ENCODE measurements at regions of chr17 and their contacts with region 1.

Region 1: DNA sequence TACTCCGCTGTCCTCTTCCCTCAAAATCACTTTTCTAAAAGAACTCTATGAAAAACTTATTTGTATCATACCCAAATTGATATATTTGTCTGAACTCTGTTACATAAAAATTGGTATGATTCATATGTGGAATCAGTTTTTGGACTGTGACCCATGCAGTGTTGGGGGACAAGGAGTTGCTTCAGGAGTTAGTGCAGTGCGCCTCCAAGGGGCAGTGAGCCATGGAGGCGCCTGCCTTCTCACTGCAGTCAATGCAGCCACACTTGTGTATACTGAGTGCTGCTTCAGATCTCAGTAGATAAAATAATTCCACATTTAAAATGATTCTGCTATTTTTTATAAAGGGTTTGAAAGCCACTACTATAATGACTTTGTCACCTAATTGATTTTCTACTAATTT is 32.5 kb downstream of the DGKE start:
- DNase-seq: peak; percentile 36
- H3K4me3 ChIP-seq: no peak overlapping the region
- H3K27ac ChIP-seq: no peak overlapping the region
- H3K4me1 ChIP-seq: peaks cover 19% of the 10 kb centered on the region
- H3K27me3 ChIP-seq: no peaks in the 10 kb centered on the region
- CTCF ChIP-seq: peak in 1 of 2 donors; percentile 6
- POLR2A ChIP-seq: no peak

Region 2: GRCh38 chr17:56699186-56699895 is 167.2 kb before region 1 on chr17:
- CTCF ChIA-PET with region 1: no interaction called
- POLR2A ChIA-PET with region 1: no interaction called
- dilution Hi-C with region 1: no loop called
- intact Hi-C with region 1: loop called (anchors 5 kb)
- DNase-seq: peak; percentile 56
- H3K4me3 ChIP-seq: no peak overlapping the region
- H3K27ac ChIP-seq: peak overlapping the region; percentile 88
- H3K4me1 ChIP-seq: peaks cover 18% of the 10 kb centered on the region
- H3K27me3 ChIP-seq: no peaks in the 10 kb centered on the region
- CTCF ChIP-seq: no peak
- POLR2A ChIP-seq: peak; percentile 42

Region 3: DNA sequence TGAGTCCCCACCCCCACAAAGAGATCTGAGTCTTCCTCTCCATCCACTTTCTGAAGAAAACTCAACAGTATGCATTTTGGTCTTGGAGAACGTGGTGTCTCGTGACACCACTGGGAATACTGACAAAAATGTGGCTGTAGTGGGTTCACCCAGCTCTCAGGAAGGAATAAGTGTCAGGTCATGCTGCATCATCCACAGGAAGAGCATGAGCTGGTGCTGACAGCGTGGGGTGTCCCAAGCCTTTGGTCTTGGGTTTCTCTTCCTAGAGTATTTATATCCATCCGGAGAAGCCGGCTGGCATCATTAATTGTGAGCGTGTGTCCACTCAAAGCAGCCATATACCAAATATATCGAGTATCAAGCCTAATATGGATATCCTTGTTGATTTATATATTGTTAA is 88.6 kb before region 1 on chr17:
- CTCF ChIA-PET with region 1: no interaction called
- POLR2A ChIA-PET with region 1: no interaction called
- dilution Hi-C with region 1: no loop called
- intact Hi-C with region 1: no loop called
- DNase-seq: no peak
- H3K4me3 ChIP-seq: no peak overlapping the region
- H3K27ac ChIP-seq: no peak overlapping the region
- H3K4me1 ChIP-seq: peaks cover 11% of the 10 kb centered on the region
- H3K27me3 ChIP-seq: peaks cover 0 to 5% of the 10 kb centered on the region in 2 experiments
- CTCF ChIP-seq: no peak
- POLR2A ChIP-seq: no peak

Region 4: DNA sequence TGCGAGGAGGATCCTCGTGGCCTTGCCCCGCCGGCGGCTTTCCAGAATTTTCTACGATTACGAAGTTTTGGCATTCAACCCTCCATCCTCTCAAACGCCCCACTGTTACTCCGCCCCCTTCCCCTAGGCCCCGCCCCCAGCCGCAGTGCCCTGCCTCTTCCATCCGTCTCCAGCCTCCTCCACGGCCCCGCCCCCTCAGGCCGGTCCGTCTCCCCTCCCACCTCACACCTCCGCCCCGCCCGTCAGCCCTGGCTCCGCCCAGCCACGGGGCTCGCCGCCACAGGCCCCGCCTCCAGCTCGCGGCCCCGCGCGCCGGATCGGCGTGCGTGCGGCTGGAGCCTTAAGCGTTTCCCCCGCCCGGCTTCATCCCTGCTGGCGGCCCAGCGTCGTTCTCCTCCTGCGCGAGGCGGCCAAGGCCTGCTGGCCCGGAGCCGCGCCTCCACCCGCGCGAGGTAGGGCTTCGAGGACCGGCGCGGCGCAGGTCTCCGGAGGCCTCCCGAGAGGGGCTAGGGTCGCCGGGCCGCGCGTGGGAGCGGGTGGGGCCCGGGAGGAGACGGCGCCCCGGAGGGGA is 32.6 kb before region 1 on chr17 and contains the starts of genes C17orf67 and DGKE:
- CTCF ChIA-PET with region 1: interaction called, 3 read pairs
- POLR2A ChIA-PET with region 1: interaction called, 5 read pairs
- dilution Hi-C with region 1: no loop called
- intact Hi-C with region 1: loop called (anchors 1 kb)
- DNase-seq: peak; percentile 97
- H3K4me3 ChIP-seq: peak within 1 kb of the TSS; percentile 76 to 77 (median 77)
- H3K27ac ChIP-seq: peak within 1 kb of the TSS; percentile 83
- H3K4me1 ChIP-seq: peaks cover 45% of the 10 kb centered on the region
- H3K27me3 ChIP-seq: no peaks in the 10 kb centered on the region
- CTCF ChIP-seq: no peak
- POLR2A ChIP-seq: peak; percentile 56
- total RNA-seq, gene C17orf67: 5.6 and 5.8 TPM in 2 replicates
- total RNA-seq, gene DGKE: 20.3 and 22.9 TPM in 2 replicates

Region 5: DNA sequence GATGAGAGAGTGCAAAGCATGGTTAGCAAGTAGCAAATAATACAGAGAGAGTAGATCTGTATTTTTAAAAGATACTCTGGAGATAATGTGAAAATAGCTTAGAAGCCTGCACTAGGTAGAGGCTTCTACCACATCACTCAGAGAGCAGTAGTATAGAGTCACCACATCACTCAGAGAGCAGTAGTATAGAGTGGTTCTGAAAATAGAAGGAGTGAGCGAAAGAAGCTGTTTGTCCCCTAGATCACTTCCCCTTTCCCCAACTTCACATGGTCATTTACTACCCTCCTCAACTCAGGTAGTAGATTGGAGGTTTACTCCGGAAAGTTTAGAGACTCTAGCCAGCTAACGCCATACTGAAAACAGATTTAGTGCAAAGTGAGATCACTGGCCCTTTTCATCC is 15.5 kb before region 1 on chr17:
- CTCF ChIA-PET with region 1: interaction called, 6 read pairs
- POLR2A ChIA-PET with region 1: no interaction called
- dilution Hi-C with region 1: no loop called
- intact Hi-C with region 1: loop called (anchors 2 kb)
- DNase-seq: no peak
- H3K4me3 ChIP-seq: no peak overlapping the region
- H3K27ac ChIP-seq: no peak overlapping the region
- H3K4me1 ChIP-seq: peaks cover 5% of the 10 kb centered on the region
- H3K27me3 ChIP-seq: no peaks in the 10 kb centered on the region
- CTCF ChIP-seq: no peak
- POLR2A ChIP-seq: no peak

Region 6: GRCh38 chr17:56891784-56892183 is 25.3 kb after region 1 on chr17:
- CTCF ChIA-PET with region 1: no interaction called
- POLR2A ChIA-PET with region 1: no interaction called
- dilution Hi-C with region 1: no loop called
- intact Hi-C with region 1: loop called (anchors 1 kb)
- DNase-seq: peak; percentile 28
- H3K4me3 ChIP-seq: no peak overlapping the region
- H3K27ac ChIP-seq: no peak overlapping the region
- H3K4me1 ChIP-seq: no peaks in the 10 kb centered on the region
- H3K27me3 ChIP-seq: no peaks in the 10 kb centered on the region
- CTCF ChIP-seq: peak; percentile 55 to 66
- POLR2A ChIP-seq: no peak

Region 7: GRCh38 chr17:56913864-56914640 is 47.6 kb after region 1 on chr17 and contains the start of gene TRIM25:
- CTCF ChIA-PET with region 1: interaction called, 4 read pairs
- POLR2A ChIA-PET with region 1: interaction called, 15 read pairs
- dilution Hi-C with region 1: no loop called
- intact Hi-C with region 1: loop called (anchors 1 kb)
- DNase-seq: peak; percentile 90
- H3K4me3 ChIP-seq: peak within 1 kb of the TSS; percentile 79 to 95 (median 88)
- H3K27ac ChIP-seq: peak within 1 kb of the TSS; percentile 93
- H3K4me1 ChIP-seq: peaks cover 33% of the 10 kb centered on the region
- H3K27me3 ChIP-seq: no peaks in the 10 kb centered on the region
- CTCF ChIP-seq: no peak
- POLR2A ChIP-seq: peak; percentile 100
- total RNA-seq, gene TRIM25: 69.4 and 98.4 TPM in 2 replicates

Region 8: GRCh38 chr17:56939901-56940343 is 73.4 kb after region 1 on chr17:
- CTCF ChIA-PET with region 1: no interaction called
- POLR2A ChIA-PET with region 1: no interaction called
- dilution Hi-C with region 1: no loop called
- intact Hi-C with region 1: loop called (anchors 1 kb)
- DNase-seq: peak; percentile 77
- H3K4me3 ChIP-seq: no peak overlapping the region
- H3K27ac ChIP-seq: peak overlapping the region; percentile 35
- H3K4me1 ChIP-seq: peaks cover 24% of the 10 kb centered on the region
- H3K27me3 ChIP-seq: no peaks in the 10 kb centered on the region
- CTCF ChIP-seq: peak; percentile 51 to 53
- POLR2A ChIP-seq: no peak